ENCODE measurements at regions of chr15 and their contacts with region 1.

Region 1: DNA sequence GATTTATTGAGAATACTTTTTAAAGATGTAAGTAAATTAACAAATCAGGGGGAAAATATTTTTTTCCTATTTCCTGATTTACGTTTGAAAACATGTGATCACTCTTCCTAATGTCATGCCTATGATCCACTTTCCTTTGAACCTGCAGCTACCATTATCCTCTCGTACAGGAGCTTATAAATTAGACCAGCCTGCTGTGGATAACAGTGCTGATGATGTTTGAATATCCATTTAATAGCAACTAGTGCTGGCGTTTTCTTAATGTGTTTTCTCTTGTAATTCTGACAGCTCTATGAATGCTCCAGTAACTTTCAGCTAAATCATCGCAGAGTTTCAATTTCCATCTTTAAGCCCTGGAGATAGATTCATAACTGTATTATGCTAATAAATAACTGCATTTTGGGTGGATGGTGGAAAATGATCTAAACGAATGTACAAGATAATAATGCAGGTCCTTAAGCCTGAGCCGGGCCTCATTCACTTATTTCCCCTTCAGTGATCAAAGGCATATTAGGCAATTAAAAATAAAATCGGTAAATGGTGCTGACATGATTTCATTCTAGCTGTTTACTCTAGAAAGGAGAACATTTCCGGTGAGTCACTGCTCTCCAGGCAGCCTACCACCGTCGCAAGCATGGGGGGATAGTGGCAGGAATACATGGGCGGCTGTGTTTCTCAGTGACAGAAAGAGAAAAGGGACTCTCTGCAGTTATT is 58.5 kb upstream of the SLC24A5 start:
- DNase-seq: peak; percentile 33
- H3K4me3 ChIP-seq: no peak overlapping the region
- H3K27ac ChIP-seq: no peak overlapping the region
- H3K4me1 ChIP-seq: no peaks in the 10 kb centered on the region
- H3K27me3 ChIP-seq: no peaks in the 10 kb centered on the region
- CTCF ChIP-seq: no peak
- POLR2A ChIP-seq: no peak

Region 2: DNA sequence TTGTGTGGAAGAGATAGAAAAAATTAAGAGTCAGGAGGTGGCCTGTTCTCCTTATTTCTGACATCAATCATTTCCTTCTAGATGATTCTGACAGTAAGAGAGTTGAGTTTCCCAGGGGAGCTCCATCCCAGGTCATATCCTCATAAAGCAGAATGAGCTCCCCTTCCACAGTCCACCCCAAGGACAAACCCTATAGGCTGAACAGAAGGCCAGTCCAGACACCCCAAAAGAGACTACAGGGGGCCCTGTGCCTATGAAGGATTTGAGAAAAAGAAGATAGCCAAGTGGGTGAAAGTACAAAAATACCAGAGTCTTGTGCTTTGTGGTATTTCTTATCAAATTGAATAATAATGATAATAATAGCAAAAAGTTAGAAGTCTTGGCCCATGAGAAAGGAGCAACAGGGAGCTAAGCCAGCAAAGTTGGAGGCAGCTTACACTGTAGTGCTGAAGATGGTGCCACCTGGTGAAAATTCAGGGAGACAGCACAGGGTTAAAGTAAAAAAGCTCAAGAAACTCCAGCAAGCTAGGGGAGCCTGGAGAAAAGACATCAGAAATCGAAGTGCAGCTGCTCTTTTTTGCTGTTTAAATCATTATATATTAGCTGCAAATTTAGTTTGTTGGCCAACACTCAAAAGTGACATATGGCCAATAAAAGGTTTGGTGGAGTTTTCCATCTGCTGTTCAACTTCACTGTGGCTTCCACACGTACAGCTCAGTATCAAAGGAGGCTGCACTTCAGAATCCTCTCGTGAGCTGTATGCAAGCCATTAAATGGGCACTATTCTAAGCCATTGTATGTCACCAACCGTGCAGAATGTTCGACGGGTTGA is 22.7 kb after region 1 on chr15:
- CTCF ChIA-PET with region 1: interaction called, 14 read pairs
- POLR2A ChIA-PET with region 1: no interaction called
- dilution Hi-C with region 1: no loop called
- intact Hi-C with region 1: no loop called
- DNase-seq: peak; percentile 18
- H3K4me3 ChIP-seq: no peak overlapping the region
- H3K27ac ChIP-seq: no peak overlapping the region
- H3K4me1 ChIP-seq: no peaks in the 10 kb centered on the region
- H3K27me3 ChIP-seq: no peaks in the 10 kb centered on the region
- CTCF ChIP-seq: peak; percentile 29 to 47
- POLR2A ChIP-seq: no peak

Measured in endothelial cell of umbilical vein (primary cell).